ENCODE measurements at regions of chr19 and their contacts with region 1.

Region 1: GRCh38 chr19:10106100-10106936 is at the start of gene PPAN:
- DNase-seq: peak; percentile 99
- H3K4me3 Mint-ChIP-seq: peak within 1 kb of the TSS; percentile 85
- H3K27ac Mint-ChIP-seq: peak within 1 kb of the TSS; percentile 100
- H3K4me1 Mint-ChIP-seq: peaks cover 61% of the 10 kb centered on the region
- H3K27me3 Mint-ChIP-seq: peaks cover 1% of the 10 kb centered on the region
- total RNA-seq, gene PPAN: 222 and 232 TPM in 2 replicates

Region 2: GRCh38 chr19:10027158-10027693 is 79.1 kb before region 1 on chr19:
- intact Hi-C with region 1: no loop called
- DNase-seq: no peak
- H3K4me3 Mint-ChIP-seq: no peak overlapping the region
- H3K27ac Mint-ChIP-seq: no peak overlapping the region
- H3K4me1 Mint-ChIP-seq: peaks cover 3% of the 10 kb centered on the region
- H3K27me3 Mint-ChIP-seq: peaks cover 13% of the 10 kb centered on the region

Region 3: GRCh38 chr19:10085641-10086590 is 20.4 kb before region 1 on chr19 and contains the start of gene SHFL:
- intact Hi-C with region 1: no loop called
- DNase-seq: peak; percentile 97
- H3K4me3 Mint-ChIP-seq: peak within 1 kb of the TSS; percentile 91
- H3K27ac Mint-ChIP-seq: peak within 1 kb of the TSS; percentile 88
- H3K4me1 Mint-ChIP-seq: peaks cover 14% of the 10 kb centered on the region
- H3K27me3 Mint-ChIP-seq: no peaks in the 10 kb centered on the region
- total RNA-seq, gene SHFL: 56.0 and 60.5 TPM in 2 replicates

Region 4: DNA sequence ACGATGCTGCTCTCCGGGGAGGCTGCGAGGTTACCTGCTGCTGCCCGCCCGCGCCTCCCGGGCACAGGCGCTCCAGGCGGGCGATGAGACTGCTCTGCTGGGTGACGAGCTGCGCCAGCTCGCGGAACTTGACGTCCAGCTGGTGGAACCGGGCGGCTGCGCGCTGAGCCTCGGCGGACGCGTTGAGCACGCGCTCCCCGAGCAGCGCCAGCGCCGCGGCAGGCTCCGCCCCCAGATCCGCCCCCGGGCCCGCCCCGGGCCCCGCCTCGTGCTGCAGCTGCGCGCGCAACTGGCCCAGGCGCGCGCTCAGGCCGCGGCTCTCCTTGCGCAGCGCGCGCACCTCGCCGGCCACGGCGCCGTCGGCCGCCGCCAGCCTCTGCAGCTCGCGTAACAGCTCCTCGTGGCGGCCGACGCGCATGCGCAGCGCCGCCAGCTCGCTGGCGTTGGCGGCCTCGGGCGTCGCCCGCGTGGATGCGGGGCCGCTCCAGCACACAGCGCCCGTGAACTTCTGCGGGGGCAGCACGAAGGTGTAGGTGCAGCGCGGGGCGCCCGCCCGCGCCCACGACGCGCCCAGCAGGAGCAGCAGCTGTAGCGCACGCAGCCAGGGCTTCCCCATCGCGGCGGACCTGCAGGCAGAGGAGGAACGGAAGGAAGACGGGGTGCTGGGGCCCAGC is 10.2 kb before region 1 on chr19:
- intact Hi-C with region 1: loop called (anchors 1 kb)
- DNase-seq: peak; percentile 98
- H3K4me3 Mint-ChIP-seq: peak overlapping the region; percentile 62
- H3K27ac Mint-ChIP-seq: peak overlapping the region; percentile 80
- H3K4me1 Mint-ChIP-seq: peaks cover 20% of the 10 kb centered on the region
- H3K27me3 Mint-ChIP-seq: no peaks in the 10 kb centered on the region

Region 5: GRCh38 chr19:10120538-10121189 is 14.3 kb after region 1 on chr19:
- intact Hi-C with region 1: loop called (anchors 1 kb)
- DNase-seq: no peak
- H3K4me3 Mint-ChIP-seq: no peak overlapping the region
- H3K27ac Mint-ChIP-seq: no peak overlapping the region
- H3K4me1 Mint-ChIP-seq: peaks cover 14% of the 10 kb centered on the region
- H3K27me3 Mint-ChIP-seq: no peaks in the 10 kb centered on the region

Region 6: GRCh38 chr19:10152100-10152499 is 45.8 kb after region 1 on chr19:
- intact Hi-C with region 1: no loop called
- DNase-seq: no peak
- H3K4me3 Mint-ChIP-seq: no peak overlapping the region
- H3K27ac Mint-ChIP-seq: no peak overlapping the region
- H3K4me1 Mint-ChIP-seq: no peaks in the 10 kb centered on the region
- H3K27me3 Mint-ChIP-seq: no peaks in the 10 kb centered on the region

Region 7: DNA sequence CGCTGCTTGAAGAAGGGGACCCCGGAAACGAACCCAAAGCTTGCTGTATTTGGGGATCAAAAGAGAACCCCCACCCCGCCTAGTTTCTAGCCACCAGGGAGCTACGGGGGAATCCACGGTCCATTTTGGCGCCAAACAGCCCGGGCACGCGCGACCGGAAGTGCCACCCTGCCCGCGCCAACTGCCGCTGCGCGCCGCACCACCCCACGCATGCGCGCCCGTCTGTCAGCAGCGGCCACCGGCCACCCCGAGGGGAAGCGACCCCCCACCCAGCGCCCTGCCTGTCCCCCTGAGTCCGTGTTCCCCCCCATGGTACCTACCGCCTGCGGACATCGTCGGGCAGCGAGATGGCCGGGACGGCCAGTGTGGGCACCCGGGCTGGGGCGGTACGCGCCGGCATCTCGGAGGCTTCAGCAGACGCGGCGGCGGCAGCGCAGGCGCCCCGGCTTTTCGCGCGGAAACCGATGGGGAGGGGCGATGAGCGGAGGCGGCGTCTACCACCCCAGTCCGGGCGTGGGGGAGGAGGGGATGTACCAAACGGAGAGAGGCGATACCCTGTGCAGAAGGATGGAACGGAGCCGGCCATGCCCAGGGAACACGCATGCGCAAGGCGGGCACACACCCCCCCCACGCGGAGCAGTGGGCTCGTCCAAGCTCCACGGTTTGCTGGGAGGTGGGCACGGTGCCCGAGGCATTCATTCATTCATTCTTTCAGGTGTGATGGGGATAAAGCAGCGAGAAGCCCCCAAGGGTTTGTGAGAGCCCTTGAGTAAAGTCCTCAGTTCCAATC is 88.4 kb after region 1 on chr19 and contains the start of gene DNMT1:
- intact Hi-C with region 1: loop called (anchors 2 kb)
- DNase-seq: peak; percentile 99
- H3K4me3 Mint-ChIP-seq: peak within 1 kb of the TSS; percentile 93
- H3K27ac Mint-ChIP-seq: peak within 1 kb of the TSS; percentile 97
- H3K4me1 Mint-ChIP-seq: peaks cover 35% of the 10 kb centered on the region
- H3K27me3 Mint-ChIP-seq: no peaks in the 10 kb centered on the region
- total RNA-seq, gene DNMT1: 410 and 414 TPM in 2 replicates

Region 8: DNA sequence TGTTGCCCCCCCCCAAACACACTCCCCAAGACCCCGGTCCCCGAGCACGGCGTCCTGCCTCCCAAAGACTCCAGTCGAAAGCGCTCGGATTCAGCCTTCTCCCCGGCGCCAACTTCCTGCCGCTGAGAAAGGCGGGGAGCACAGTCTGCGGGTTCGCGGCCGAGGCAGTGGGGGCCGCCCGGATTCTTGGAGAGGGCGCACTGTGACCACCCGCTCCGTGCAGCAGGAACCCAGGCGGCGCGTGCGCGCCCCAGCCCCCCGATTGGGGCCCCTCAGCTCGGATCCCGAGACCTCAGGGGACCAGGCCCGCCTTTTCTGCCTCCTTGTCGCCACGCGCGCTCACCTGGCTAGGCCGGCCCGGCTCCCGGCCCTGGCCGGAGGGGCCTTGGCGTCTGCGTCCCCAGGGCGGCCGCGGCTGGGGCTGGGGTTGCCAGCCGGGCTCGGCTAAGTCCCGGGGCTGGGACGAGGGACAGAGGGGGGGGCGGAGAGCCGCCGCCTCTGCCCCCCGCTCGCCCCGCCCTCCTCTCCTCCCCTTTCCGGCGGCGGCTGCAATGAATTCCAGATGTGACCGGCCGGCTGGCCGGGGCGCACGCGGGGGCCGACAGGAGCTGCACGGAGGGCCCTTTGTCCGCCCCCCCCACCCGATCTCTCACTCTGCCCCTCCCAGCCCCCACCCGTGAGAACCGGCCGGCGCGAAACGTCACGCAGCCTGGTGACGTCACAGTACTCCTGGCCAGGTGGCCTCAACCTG is 124.7 kb after region 1 on chr19 and contains the start of gene S1PR2:
- intact Hi-C with region 1: no loop called
- DNase-seq: peak; percentile 89
- H3K4me3 Mint-ChIP-seq: peak within 1 kb of the TSS; percentile 89
- H3K27ac Mint-ChIP-seq: peak within 1 kb of the TSS; percentile 88
- H3K4me1 Mint-ChIP-seq: peaks cover 16% of the 10 kb centered on the region
- H3K27me3 Mint-ChIP-seq: no peaks in the 10 kb centered on the region
- total RNA-seq, gene S1PR2: 14.3 and 14.7 TPM in 2 replicates

Region 9: GRCh38 chr19:11090054-11090900 is 984.0 kb after region 1 on chr19:
- intact Hi-C with region 1: loop called (anchors 10 kb)
- DNase-seq: peak; percentile 99
- H3K4me3 Mint-ChIP-seq: peak overlapping the region; percentile 97
- H3K27ac Mint-ChIP-seq: peak overlapping the region; percentile 100
- H3K4me1 Mint-ChIP-seq: peaks cover 36% of the 10 kb centered on the region
- H3K27me3 Mint-ChIP-seq: no peaks in the 10 kb centered on the region